ENCODE measurements at regions of chr1 and their contacts with region 1.

Region 1: DNA sequence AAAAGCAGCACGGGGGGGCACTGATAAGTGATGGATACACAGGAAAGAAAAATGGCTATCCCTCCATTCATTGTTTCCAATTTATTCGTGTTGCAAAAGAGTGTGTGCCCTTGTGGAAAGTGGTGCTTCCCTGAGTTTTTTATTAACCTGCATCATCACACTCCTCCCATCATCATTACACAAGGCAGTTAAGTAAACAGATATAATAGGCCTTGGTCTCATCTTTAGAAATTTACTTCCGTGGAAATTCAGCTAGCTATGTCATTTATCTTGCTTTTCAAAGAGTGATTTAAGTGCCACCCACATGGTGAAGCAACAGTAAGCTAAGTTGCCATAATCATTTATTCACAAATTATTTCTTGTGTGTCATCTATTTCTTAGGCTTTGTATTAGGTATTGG is 473.3 kb downstream of the NEGR1 start:
- DNase-seq: no peak
- ATAC-seq: no peak
- H3K4me3 Mint-ChIP-seq: no peak overlapping the region
- H3K27ac Mint-ChIP-seq: no peak overlapping the region
- H3K4me1 Mint-ChIP-seq: no peaks in the 10 kb centered on the region
- H3K27me3 Mint-ChIP-seq: no peaks in the 10 kb centered on the region

Region 2: DNA sequence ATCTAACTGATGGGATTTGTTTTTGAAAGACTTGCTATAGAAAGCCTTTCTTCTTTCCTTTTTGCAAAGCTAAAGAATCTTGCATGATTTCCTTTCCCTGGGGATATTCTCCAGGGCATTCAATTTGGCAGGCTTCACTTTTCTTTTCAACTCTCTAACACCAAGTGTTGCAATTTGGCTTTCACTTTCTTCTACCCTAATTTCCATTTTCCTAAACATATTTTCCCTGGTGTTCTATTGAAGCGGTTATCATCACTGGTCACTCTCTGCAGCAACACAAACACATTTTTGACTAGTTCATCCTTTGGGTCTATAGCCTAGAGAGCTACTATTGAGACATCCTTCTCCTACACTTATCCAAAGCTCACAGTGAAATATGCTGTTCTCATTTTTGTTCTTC is 48.8 kb after region 1 on chr1:
- CTCF ChIA-PET with region 1: no interaction called
- POLR2A ChIA-PET with region 1: no interaction called
- intact Hi-C with region 1: loop called in 1 of 2 experiments (anchors 5 kb)
- DNase-seq: no peak
- ATAC-seq: no peak
- H3K4me3 Mint-ChIP-seq: no peak overlapping the region
- H3K27ac Mint-ChIP-seq: no peak overlapping the region
- H3K4me1 Mint-ChIP-seq: peaks cover 2% of the 10 kb centered on the region
- H3K27me3 Mint-ChIP-seq: no peaks in the 10 kb centered on the region

Region 3: DNA sequence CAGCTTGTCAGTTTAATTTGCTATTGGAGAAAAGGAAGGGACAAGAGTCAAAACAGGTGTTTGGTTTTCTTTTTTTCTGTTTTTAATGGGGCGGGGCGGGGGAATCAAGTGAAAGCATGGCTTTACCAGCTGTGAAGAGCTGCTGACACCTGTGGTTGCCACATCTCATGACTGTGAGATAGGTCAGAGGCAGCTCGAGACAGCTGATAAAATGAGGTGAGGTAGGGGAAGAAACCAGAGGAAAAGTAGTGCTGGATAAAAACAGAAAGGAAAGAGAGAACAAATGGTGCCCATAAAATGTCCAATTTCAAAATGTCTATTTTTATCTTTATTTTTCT is 201.0 kb after region 1 on chr1:
- CTCF ChIA-PET with region 1: no interaction called
- POLR2A ChIA-PET with region 1: no interaction called
- intact Hi-C with region 1: no loop called
- DNase-seq: no peak
- ATAC-seq: no peak
- H3K4me3 Mint-ChIP-seq: no peak overlapping the region
- H3K27ac Mint-ChIP-seq: no peak overlapping the region
- H3K4me1 Mint-ChIP-seq: no peaks in the 10 kb centered on the region
- H3K27me3 Mint-ChIP-seq: no peaks in the 10 kb centered on the region

Region 4: GRCh38 chr1:72253132-72253531 is 444.0 kb after region 1 on chr1:
- CTCF ChIA-PET with region 1: no interaction called
- POLR2A ChIA-PET with region 1: no interaction called
- intact Hi-C with region 1: no loop called
- DNase-seq: no peak
- ATAC-seq: no peak
- H3K4me3 Mint-ChIP-seq: no peak overlapping the region
- H3K27ac Mint-ChIP-seq: no peak overlapping the region
- H3K4me1 Mint-ChIP-seq: no peaks in the 10 kb centered on the region
- H3K27me3 Mint-ChIP-seq: no peaks in the 10 kb centered on the region

Region 5: GRCh38 chr1:72601035-72601674 is 792.1 kb after region 1 on chr1:
- CTCF ChIA-PET with region 1: no interaction called
- POLR2A ChIA-PET with region 1: no interaction called
- intact Hi-C with region 1: no loop called
- DNase-seq: no peak
- ATAC-seq: no peak
- H3K4me3 Mint-ChIP-seq: no peak overlapping the region
- H3K27ac Mint-ChIP-seq: no peak overlapping the region
- H3K4me1 Mint-ChIP-seq: no peaks in the 10 kb centered on the region
- H3K27me3 Mint-ChIP-seq: no peaks in the 10 kb centered on the region